ENCODE measurements at regions of chr12 and their contacts with region 1.

Region 1: GRCh38 chr12:95217377-95218149 is at the starts of genes FGD6 and VEZT:
- DNase-seq: peak; percentile 94 to 99 (median 98)
- ATAC-seq: peak; percentile 90 to 95 (median 93)
- H3K4me3 ChIP-seq: peak within 1 kb of the TSS; percentile 83 to 98
- H3K4me3 Mint-ChIP-seq: peak within 1 kb of the TSS; percentile 88 to 100 (median 98)
- H3K27ac ChIP-seq: peak within 1 kb of the TSS; percentile 96
- H3K27ac Mint-ChIP-seq: peak within 1 kb of the TSS; percentile 96 to 99
- H3K4me1 ChIP-seq: peaks cover 7 to 15% of the 10 kb centered on the region in 2 experiments
- H3K4me1 Mint-ChIP-seq: peaks cover 38 to 42% (median 42%) of the 10 kb centered on the region in 3 donors
- H3K27me3 ChIP-seq: no peaks in the 10 kb centered on the region
- H3K27me3 Mint-ChIP-seq: no peaks in the 10 kb centered on the region
- total RNA-seq, gene FGD6: 0.55 to 1.9 (median 0.70) TPM
- total RNA-seq, gene VEZT: 27.0 to 48.9 (median 36.8) TPM

Region 2: GRCh38 chr12:95200128-95200894 is 17.3 kb before region 1 on chr12:
- CTCF ChIA-PET with region 1: no interaction called
- POLR2A ChIA-PET with region 1: interaction called in 1 of 2 experiments, 17 read pairs
- DNase-seq: no peak
- ATAC-seq: no peak
- H3K4me3 ChIP-seq: no peak overlapping the region
- H3K4me3 Mint-ChIP-seq: no peak overlapping the region
- H3K27ac ChIP-seq: no peak overlapping the region
- H3K27ac Mint-ChIP-seq: no peak overlapping the region
- H3K4me1 ChIP-seq: peaks cover 0 to 12% of the 10 kb centered on the region in 2 experiments
- H3K4me1 Mint-ChIP-seq: peaks cover 8 to 21% (median 9%) of the 10 kb centered on the region in 3 donors
- H3K27me3 ChIP-seq: peaks cover 0 to 3% of the 10 kb centered on the region in 2 experiments
- H3K27me3 Mint-ChIP-seq: peaks cover 0 to 3% of the 10 kb centered on the region in 2 donors

Region 3: DNA sequence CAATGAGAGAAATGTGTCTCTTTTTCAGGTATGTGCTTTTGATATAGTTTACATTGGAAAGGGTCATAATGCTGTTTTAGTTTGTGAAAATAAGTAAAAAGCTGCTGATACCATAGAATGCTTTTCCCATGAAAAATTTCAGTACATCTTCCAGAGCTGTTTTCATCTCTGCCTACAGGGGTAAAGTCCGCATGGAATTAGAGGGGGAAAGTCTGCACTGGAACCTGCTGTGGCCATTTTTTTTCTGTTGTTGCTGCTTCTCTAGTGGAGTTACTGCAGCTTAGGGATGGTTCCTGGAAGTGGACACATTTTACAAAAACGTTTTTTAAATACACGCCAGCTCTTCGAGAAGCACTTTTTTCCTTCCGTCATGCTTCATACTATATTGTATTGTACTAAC is 81.4 kb after region 1 on chr12:
- CTCF ChIA-PET with region 1: no interaction called
- POLR2A ChIA-PET with region 1: interaction called in 1 of 2 experiments, 10 read pairs
- DNase-seq: no peak
- ATAC-seq: no peak
- H3K4me3 ChIP-seq: no peak overlapping the region
- H3K4me3 Mint-ChIP-seq: no peak overlapping the region
- H3K27ac ChIP-seq: no peak overlapping the region
- H3K27ac Mint-ChIP-seq: no peak overlapping the region
- H3K4me1 ChIP-seq: no peaks in the 10 kb centered on the region
- H3K4me1 Mint-ChIP-seq: no peaks in the 10 kb centered on the region
- H3K27me3 ChIP-seq: no peaks in the 10 kb centered on the region
- H3K27me3 Mint-ChIP-seq: no peaks in the 10 kb centered on the region